HEK293 (cell line): ENCODE measurements at regions of chr17 and their contacts with region 1.

Region 1: DNA sequence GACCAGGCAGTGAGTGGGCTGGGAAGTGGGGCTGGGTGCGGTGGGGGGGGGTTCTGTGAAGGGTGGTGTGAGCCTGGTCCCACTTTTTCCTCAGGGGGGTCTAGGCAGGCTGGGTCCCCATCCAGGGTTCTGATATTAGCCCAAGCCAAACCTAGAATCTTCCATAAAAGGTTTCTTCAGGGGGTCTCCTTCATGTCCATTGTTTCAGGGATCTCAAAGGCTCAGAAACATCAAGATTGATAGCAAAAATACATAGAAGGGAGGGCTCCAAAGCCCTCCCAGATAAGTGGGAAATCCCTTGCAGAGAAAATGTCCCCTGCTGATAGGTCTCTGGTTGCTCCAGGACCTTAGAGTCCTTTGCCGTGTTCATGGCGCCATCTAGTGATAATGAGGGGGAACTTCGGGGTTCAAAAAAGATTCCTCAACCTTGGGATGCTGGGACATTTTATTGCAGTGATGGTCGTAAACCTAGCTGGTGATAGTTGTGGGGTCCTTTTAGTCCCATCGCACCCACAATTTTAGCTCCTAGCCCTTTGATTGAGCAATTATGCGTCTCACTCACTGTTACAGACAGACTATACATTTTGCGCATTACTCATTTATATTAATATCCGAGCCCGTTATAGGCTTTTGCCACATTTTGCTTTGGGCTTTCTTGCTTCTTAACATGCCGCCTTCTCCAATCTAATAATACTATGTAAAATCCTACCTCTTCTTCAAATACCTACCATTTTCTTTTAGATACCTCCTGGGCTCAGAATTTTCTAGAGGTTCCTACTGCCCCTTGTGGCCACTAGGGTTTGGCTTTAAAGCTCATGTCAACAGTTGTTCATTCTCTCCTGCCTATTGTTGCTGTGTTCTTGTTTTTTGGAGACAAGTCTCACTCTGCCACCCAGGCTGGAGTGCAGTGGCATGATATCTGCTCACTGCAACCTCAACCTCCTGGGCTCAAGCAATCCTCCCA is 35.1 kb downstream of the IGF2BP1 start:
- H3K4me3 ChIP-seq: no peak overlapping the region
- H3K27ac ChIP-seq: 0 out of 2 replicates have a peak overlapping the region, but pooled peaks have one; percentile 5
- H3K4me1 ChIP-seq: no peaks in the 10 kb centered on the region; the same call in 1 of the 2 replicates
- CTCF ChIP-seq: peak; percentile 73

Region 2: GRCh38 chr17:48561884-48562810 is 470.1 kb before region 1 on chr17:
- CTCF ChIA-PET with region 1: no interaction called
- POLR2A ChIA-PET with region 1: no interaction called
- H3K4me3 ChIP-seq: no peak overlapping the region
- H3K27ac ChIP-seq: peak overlapping the region; percentile 76
- H3K4me1 ChIP-seq: peaks cover 88% of the 10 kb centered on the region
- CTCF ChIP-seq: peak; percentile 29; the same call in 1 of the 2 replicates

Region 3: DNA sequence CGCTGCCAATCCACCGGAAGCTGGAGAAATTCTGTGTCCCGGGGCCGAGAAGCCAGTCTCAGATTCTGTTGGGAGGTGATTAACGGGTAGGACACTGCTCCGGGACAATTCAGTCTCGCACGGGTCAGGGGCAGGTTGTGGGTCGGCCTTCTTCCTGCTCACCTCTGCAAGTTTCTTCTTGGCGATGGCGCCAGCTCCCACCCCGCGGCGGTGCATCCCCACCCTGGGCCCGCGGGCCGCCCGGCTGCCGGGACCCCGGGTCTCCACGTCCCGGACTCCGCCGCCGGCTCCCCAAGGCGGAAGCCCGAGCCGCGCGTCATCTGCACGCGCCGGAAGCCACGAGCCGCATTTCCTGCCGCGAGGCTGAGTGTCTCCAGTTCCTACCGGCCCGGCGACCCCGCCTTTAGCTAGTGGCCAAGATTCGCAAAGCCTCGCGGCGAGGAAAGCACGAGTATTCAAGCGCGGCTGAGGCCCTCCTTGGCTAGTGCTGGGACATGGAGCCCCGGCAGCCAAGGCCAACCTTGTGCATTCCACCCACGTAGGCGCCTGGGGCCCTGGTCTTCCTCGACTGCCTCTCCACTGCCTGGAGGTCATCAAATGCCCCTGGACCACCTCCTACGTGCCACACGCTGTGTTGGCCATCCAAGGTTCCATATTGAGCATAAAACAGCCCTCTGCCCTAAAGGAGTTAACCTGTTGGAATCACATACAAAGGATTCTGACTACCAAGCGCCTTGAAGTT is 87.6 kb before region 1 on chr17 and contains the start of gene SNF8:
- CTCF ChIA-PET with region 1: interaction called, 13 read pairs
- POLR2A ChIA-PET with region 1: interaction called, 5 read pairs
- H3K4me3 ChIP-seq: peak within 1 kb of the TSS; percentile 69
- H3K27ac ChIP-seq: peak within 1 kb of the TSS; percentile 76
- H3K4me1 ChIP-seq: 0 out of 2 replicates have a peak, but pooled peaks cover 3% of the 10 kb centered on the region
- CTCF ChIP-seq: 0 out of 2 replicates have a peak, but pooled peaks have one; percentile 15

Region 4: GRCh38 chr17:48961516-48962233 is 70.6 kb before region 1 on chr17:
- CTCF ChIA-PET with region 1: interaction called, 15 read pairs
- POLR2A ChIA-PET with region 1: interaction called, 4 read pairs
- H3K4me3 ChIP-seq: no peak overlapping the region
- H3K27ac ChIP-seq: no peak overlapping the region
- H3K4me1 ChIP-seq: no peaks in the 10 kb centered on the region; the same call in 1 of the 2 replicates
- CTCF ChIP-seq: no peak

Region 5: GRCh38 chr17:49016788-49017463 is 15.3 kb before region 1 on chr17:
- CTCF ChIA-PET with region 1: interaction called, 25 read pairs
- POLR2A ChIA-PET with region 1: interaction called, 5 read pairs
- H3K4me3 ChIP-seq: no peak overlapping the region
- H3K27ac ChIP-seq: 0 out of 2 replicates have a peak overlapping the region, but pooled peaks have one; percentile 48
- H3K4me1 ChIP-seq: peaks cover 42% of the 10 kb centered on the region
- CTCF ChIP-seq: no peak